Ovary (tissue), 10 donors: ENCODE measurements at regions of chr12 and their contacts with region 1.

Region 1: GRCh38 chr12:9331218-9331626 is 123.0 kb upstream of the PZP start:
- DNase-seq: peak; percentile 51 to 83 (median 73)
- H3K4me3 ChIP-seq: no peak overlapping the region
- H3K27ac ChIP-seq: no peak overlapping the region
- H3K4me1 ChIP-seq: no peaks in the 10 kb centered on the region
- H3K27me3 ChIP-seq: no peaks in the 10 kb centered on the region
- CTCF ChIP-seq: peak; percentile 78 to 84 (median 79)
- EP300 ChIP-seq: no peak
- POLR2A ChIP-seq: no peak

Region 2: GRCh38 chr12:9391815-9392214 is 60.6 kb after region 1 on chr12:
- intact Hi-C with region 1: no loop called
- DNase-seq: no peak
- H3K4me3 ChIP-seq: no peak overlapping the region
- H3K27ac ChIP-seq: peak overlapping the region in 1 of 2 donors; percentile 6
- H3K4me1 ChIP-seq: peaks cover 10% of the 10 kb centered on the region
- H3K27me3 ChIP-seq: no peaks in the 10 kb centered on the region
- CTCF ChIP-seq: no peak
- EP300 ChIP-seq: no peak
- POLR2A ChIP-seq: no peak

Region 3: DNA sequence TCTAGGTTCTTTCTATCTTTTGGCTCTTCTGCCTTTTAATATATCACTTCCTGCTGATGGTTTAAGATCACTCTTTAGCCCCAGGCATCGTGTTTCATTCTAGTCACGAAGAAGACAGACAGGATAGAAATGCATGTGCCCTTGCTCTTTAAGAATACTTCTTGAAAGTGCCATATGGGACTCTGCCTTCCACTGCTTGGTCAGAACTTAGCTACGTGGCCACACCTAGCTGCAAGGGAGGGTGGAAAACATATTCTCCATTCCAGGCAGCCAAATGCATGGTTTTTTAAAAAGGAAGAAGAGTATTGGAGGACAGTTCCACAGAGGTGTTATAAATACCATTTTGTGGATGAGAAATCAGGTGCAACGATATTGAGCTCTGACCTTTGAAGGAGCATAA is 133.2 kb after region 1 on chr12:
- intact Hi-C with region 1: loop called in 1 of 4 experiments (anchors 10 kb)
- DNase-seq: no peak
- H3K4me3 ChIP-seq: no peak overlapping the region
- H3K27ac ChIP-seq: no peak overlapping the region
- H3K4me1 ChIP-seq: no peaks in the 10 kb centered on the region
- H3K27me3 ChIP-seq: no peaks in the 10 kb centered on the region
- CTCF ChIP-seq: no peak
- EP300 ChIP-seq: no peak
- POLR2A ChIP-seq: no peak